Gastrocnemius medialis (tissue), 4 donors: ENCODE measurements at regions of chr1 and their contacts with region 1.

Region 1: DNA sequence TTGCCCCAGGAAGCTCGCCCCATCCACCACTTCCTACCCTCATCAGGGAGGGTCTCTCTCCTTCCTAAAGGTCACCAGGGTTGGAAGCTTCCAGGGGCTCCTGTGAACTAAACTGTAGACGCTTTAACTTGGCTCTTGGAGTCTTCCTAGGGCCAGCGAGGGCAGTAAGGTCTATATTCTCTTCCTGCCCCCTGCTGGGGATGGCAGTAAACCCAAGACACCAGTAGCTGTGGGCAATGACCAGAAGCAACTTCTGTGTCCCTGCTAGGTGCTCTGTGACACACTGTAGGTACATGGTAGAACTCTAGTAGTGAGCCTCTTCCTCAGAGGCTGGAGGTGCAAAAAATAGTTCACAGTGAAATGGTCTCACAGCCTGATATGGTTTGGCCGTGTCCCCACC is 30.0 kb downstream of the KCND3 start:
- DNase-seq: no peak
- ATAC-seq: no peak
- H3K4me3 ChIP-seq: no peak overlapping the region
- H3K27ac ChIP-seq: no peak overlapping the region
- H3K4me1 ChIP-seq: peaks cover 23 to 37% of the 10 kb centered on the region in 2 donors
- H3K27me3 ChIP-seq: no peaks in the 10 kb centered on the region
- CTCF ChIP-seq: peak in 3 of 5 experiments; percentile 14 to 32 (median 27)
- POLR2A ChIP-seq: no peak

Region 2: DNA sequence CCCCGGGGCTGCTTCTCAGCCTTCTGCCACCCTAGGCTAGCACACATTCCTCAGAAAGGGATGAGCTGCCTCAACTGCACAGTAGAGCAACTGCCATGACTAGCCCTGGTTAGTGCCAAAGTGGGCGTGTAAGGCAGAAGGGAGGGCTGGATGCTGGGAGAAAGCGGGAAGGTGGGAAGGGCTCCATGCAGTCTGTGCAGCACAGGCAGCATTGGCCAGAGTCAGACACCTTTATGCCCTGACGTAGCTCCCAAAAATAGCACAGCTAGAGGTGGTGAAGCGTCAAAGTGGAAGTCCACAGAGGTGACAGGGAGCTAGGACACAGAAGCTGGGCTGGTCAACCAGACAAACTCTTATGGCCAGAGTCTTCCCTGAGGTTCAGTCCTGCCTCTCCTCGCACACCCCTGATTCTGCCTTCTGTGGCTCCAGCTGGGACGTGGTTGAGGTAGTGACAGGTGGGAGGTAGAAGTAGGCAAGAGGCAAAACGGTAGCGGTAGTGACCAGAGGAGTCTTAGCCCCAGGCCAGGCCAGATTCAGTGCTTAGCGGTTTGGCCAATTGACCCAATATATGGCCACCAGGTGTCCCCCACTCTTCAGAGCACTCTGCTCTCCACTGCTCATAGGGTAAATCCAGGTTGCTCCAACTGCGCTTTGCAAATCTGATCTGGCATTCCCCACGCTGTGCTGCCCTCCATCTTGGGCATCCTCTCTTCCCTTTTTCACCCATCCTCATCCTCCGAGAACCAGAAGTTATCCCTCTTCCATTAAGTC is 158.2 kb before region 1 on chr1:
- in situ Hi-C with region 1: no loop called
- intact Hi-C with region 1: loop called (anchors 1 kb)
- DNase-seq: no peak
- ATAC-seq: peak; percentile 82 to 86
- H3K4me3 ChIP-seq: no peak overlapping the region
- H3K27ac ChIP-seq: peak overlapping the region in 1 of 4 donors; percentile 49
- H3K4me1 ChIP-seq: peaks cover 0 to 3% of the 10 kb centered on the region in 2 donors
- H3K27me3 ChIP-seq: no peaks in the 10 kb centered on the region
- CTCF ChIP-seq: peak; percentile 13 to 46 (median 30)
- POLR2A ChIP-seq: no peak